Mammary epithelial cell (primary cell): ENCODE measurements at regions of chr1 and their contacts with region 1.

Region 1: DNA sequence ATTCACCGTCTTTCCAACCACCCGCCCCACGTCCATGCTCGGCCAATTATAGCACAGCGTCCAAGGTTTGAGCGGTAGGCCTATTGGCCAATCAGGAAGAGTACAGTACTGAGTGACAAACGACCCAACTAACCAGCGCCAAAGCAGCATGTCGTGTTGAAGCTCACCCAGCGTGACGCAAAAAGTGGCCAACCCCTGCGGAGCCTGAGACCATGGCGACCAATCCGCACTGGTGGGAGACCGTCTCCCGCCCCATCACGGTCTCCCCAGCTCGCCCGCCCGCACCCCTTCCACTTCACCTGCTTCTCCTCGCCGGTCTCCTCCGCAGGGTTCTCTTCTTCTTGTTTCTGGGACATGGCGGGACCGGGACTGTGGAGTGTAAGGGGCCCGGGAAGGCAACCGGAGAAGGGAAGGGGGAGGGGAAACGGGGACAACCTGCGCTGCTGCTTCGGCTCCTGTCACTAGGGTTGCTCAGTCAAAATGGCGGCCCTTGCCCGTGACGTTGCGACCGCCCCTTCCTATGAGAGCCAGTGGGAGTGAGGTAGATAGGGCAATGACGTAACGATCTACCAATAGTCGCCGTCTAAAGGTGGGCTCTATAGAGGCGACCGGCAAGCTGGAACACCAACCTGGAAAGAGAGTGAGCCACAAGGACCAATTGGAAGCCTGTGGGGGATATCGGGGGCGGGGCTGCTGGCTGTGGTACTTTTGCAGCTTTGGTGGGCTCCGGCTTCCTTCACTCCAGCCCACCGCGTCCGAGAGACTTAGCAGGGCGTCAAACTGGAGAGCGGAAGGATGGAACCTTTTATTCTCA is at the start of gene ENSA:
- DNase-seq: peak; percentile 99
- H3K4me3 ChIP-seq: peak within 1 kb of the TSS; percentile 83 to 87 (median 83)
- H3K27ac ChIP-seq: peak within 1 kb of the TSS; percentile 91
- H3K4me1 ChIP-seq: peaks cover 47% of the 10 kb centered on the region
- H3K27me3 ChIP-seq: no peaks in the 10 kb centered on the region
- CTCF ChIP-seq: no peak
- total RNA-seq, gene ENSA: 62.5 to 178 TPM

Region 2: DNA sequence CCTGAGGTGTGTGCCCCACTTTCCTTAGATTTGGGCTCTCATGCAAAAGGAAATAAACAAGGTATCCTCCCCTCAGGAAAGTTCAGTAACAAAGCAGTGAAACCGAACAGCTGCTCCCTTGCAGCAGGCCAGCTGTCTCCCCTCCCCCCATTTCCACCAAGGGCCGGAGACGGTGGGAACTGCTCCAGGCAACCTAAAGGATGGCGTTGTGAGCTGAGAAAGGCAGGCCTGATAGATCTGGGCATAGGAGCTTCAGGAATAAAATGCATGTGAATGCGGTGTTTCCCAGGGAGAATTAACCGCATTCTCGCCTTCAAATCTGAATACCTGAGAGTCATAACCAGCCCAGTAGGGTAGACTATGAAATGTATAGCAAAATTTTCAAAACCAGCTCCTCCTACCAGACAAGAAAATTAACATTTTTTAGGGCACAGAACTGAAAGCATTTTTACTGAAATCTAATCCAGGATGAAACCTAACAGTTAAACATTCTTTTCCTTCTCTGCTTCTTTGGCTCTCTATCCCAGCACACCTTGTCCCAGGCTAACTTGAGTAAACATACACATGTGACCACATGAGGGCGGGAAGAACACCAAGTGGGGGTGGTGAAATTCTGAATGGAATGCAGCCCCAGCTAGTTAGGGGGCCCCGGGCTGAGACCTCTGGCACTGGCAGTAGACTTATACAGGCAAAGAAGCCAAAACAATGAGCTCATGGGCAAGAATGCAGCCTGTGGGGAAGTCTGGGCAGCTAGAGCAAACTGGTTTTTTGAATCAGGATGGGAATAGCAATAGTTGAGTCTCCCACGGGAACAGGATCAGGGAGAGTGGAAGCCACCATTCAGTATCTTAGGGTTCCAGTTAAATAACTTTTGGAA is 61.4 kb before region 1 on chr1:
- CTCF ChIA-PET with region 1: no interaction called
- dilution Hi-C with region 1: loop called (anchors 5 kb)
- in situ Hi-C with region 1: loop called in 1 of 2 experiments (anchors 5 kb)
- intact Hi-C with region 1: no loop called
- DNase-seq: peak; percentile 97
- H3K4me3 ChIP-seq: peak overlapping the region in 1 of 3 experiments; percentile 0
- H3K27ac ChIP-seq: peak overlapping the region; percentile 88
- H3K4me1 ChIP-seq: peaks cover 69% of the 10 kb centered on the region
- H3K27me3 ChIP-seq: no peaks in the 10 kb centered on the region
- CTCF ChIP-seq: no peak

Region 3: DNA sequence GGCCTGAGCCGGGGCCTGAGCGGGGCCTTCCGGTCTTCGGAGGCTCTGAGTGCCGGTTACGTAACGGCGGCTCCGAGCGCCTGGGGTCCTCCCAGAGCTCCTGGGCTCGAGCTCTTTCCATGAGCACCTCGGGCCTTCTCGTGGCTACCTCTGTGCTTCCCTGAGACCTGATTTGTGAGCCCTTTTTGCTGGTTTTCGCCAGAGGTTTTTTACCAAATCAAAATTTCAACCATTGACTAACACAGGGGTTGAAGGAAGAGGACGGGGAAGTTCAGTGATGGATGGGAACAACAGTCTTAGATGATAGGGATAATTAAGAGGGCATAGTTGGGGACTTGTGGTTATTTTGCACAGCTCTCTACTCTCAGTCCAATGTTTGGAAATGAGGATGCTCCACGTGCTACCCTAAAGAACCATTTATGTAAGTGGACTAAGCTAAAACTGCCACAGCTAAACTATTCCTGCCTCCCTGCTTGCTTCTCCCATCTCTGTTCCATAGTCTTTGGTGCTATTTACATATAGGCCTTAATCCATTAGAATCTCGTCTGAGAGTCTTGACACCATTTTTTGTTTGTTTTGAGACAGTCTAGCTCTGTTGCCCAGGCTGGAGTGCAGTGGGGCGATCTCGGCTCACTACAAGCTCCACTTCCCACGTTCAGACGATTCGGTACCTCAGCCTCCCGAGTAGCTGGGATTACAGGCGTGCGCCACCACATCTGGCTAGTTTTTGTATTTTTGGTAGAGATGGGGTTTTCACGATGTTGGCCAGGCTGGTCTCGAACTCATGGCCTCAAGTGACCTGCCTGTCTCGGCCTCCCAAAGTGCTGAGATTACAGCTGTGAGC is 49.3 kb before region 1 on chr1:
- CTCF ChIA-PET with region 1: no interaction called
- dilution Hi-C with region 1: no loop called
- in situ Hi-C with region 1: no loop called
- intact Hi-C with region 1: no loop called
- DNase-seq: no peak
- H3K4me3 ChIP-seq: peak overlapping the region; percentile 42 to 46 (median 43)
- H3K27ac ChIP-seq: peak overlapping the region; percentile 89
- H3K4me1 ChIP-seq: peaks cover 11% of the 10 kb centered on the region
- H3K27me3 ChIP-seq: no peaks in the 10 kb centered on the region
- CTCF ChIP-seq: no peak

Region 4: DNA sequence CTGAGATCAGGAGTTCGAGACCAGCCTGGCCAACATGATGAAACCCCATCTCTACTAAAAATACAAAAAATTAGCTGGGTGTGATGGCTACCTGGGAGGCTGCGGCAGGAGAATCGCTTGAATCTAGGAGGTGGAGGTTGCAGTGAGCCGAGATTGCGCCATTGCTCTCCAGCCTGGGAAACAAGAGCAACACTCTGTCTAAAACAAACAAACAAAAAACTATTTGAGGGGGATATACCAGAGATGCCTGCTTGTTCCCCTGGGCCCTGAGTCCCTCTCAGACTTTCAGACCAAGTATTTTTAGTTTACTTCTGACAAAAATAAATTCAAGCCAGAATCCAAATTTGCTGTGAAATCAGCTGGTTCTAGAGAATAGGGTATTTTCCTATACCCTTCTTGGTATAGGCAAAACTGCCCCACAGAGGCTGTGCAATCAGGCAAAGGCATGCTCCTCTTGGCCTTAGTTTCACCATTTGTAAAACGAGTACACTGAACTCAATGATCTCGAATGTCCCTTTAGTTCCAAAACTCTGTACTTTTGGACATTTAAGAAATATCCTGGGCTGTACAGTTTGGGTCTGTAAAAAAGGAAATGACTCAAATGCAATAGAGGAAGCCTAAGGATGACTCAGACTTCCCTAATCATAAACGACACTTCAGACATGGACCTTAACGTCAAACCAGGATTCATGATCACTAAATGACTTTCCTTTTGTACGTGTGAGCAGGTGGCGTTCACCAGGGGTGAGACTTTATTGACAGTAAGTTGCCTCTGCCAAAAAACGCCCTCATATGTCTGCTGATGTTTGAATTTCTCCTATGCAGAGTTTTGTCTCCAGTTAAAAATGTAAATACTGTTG is 16.0 kb before region 1 on chr1:
- CTCF ChIA-PET with region 1: no interaction called
- dilution Hi-C with region 1: no loop called
- in situ Hi-C with region 1: no loop called
- intact Hi-C with region 1: loop called (anchors 1 kb)
- DNase-seq: peak; percentile 93
- H3K4me3 ChIP-seq: no peak overlapping the region
- H3K27ac ChIP-seq: peak overlapping the region; percentile 99
- H3K4me1 ChIP-seq: peaks cover 53% of the 10 kb centered on the region
- H3K27me3 ChIP-seq: no peaks in the 10 kb centered on the region
- CTCF ChIP-seq: no peak

Region 5: DNA sequence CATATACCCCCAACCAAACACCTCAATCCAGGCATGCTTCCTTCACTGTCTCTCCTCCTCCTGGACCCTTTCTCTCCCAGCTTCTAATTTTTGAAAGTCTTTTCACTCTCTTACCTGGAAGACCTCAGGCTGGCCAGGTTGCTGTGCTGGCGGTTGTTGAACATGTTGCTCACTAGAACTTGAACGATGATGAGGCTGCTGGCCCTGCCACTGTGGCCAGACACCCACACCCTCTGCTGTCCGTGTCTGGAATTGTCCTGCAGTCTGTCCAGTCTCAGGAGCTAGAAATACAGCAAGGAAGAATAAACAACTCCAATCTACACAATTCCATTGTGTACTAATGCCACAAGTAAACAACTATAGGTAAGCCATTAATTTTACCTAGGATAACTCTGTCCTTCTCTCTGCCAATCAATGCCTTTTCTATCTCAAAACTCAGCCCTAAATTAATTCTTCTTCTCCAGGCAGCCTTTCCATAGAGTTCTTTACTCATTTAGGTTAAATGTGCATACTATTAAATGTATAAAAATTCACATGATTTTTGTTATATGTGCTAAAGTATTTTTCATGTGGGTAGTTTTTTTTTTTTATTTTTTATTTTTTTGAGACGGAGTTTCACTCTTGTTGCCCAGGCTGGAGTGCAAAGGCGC is 183.9 kb after region 1 on chr1:
- CTCF ChIA-PET with region 1: no interaction called
- dilution Hi-C with region 1: no loop called
- in situ Hi-C with region 1: no loop called
- intact Hi-C with region 1: loop called (anchors 2 kb)
- DNase-seq: peak; percentile 61
- H3K4me3 ChIP-seq: no peak overlapping the region
- H3K27ac ChIP-seq: no peak overlapping the region
- H3K4me1 ChIP-seq: peaks cover 14% of the 10 kb centered on the region
- H3K27me3 ChIP-seq: no peaks in the 10 kb centered on the region
- CTCF ChIP-seq: peak; percentile 90 to 95

Region 6: GRCh38 chr1:150979092-150980056 is 350.1 kb after region 1 on chr1:
- CTCF ChIA-PET with region 1: no interaction called
- dilution Hi-C with region 1: no loop called
- in situ Hi-C with region 1: no loop called
- intact Hi-C with region 1: loop called (anchors 5 kb)
- DNase-seq: peak; percentile 73
- H3K4me3 ChIP-seq: no peak overlapping the region
- H3K27ac ChIP-seq: no peak overlapping the region
- H3K4me1 ChIP-seq: peaks cover 47% of the 10 kb centered on the region
- H3K27me3 ChIP-seq: no peaks in the 10 kb centered on the region
- CTCF ChIP-seq: peak; percentile 100